ENCODE measurements at regions of chr12 and their contacts with region 1.

Region 1: GRCh38 chr12:43179486-43179885 is 372.5 kb downstream of the ADAMTS20 start:
- DNase-seq: no peak
- ATAC-seq: no peak
- H3K4me3 ChIP-seq: no peak overlapping the region
- H3K4me3 Mint-ChIP-seq: no peak overlapping the region
- H3K27ac ChIP-seq: no peak overlapping the region
- H3K27ac Mint-ChIP-seq: no peak overlapping the region
- H3K4me1 ChIP-seq: no peaks in the 10 kb centered on the region
- H3K4me1 Mint-ChIP-seq: no peaks in the 10 kb centered on the region
- H3K27me3 ChIP-seq: no peaks in the 10 kb centered on the region
- H3K27me3 Mint-ChIP-seq: no peaks in the 10 kb centered on the region

Region 2: GRCh38 chr12:43151441-43151981 is 28.0 kb before region 1 on chr12:
- CTCF ChIA-PET with region 1: no interaction called
- POLR2A ChIA-PET with region 1: interaction called in 1 of 2 experiments, 21 read pairs
- DNase-seq: no peak
- ATAC-seq: no peak
- H3K4me3 ChIP-seq: no peak overlapping the region
- H3K4me3 Mint-ChIP-seq: no peak overlapping the region
- H3K27ac ChIP-seq: no peak overlapping the region
- H3K27ac Mint-ChIP-seq: no peak overlapping the region
- H3K4me1 ChIP-seq: no peaks in the 10 kb centered on the region
- H3K4me1 Mint-ChIP-seq: no peaks in the 10 kb centered on the region
- H3K27me3 ChIP-seq: no peaks in the 10 kb centered on the region
- H3K27me3 Mint-ChIP-seq: no peaks in the 10 kb centered on the region

Region 3: DNA sequence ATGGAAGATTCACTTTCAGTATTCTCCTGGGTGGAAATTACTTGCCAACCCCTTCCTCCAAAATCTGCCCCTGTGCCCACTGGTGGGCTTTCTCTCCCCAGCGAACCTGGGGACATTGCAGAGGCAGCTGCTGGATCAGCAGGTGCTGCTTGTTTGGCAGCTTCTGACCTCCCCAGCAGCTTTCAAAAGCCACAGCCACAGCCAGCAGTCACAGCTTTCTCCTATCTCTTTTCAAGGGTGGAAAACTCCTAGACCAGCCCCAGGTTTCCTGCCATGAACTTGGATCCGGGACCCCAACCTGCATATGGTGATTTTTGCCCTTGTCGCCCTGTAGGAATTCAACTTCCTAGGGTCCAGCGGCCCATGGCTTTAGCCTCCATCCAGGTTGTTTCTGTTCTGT is 41.7 kb after region 1 on chr12:
- CTCF ChIA-PET with region 1: no interaction called
- POLR2A ChIA-PET with region 1: no interaction called
- DNase-seq: no peak
- ATAC-seq: no peak
- H3K4me3 ChIP-seq: no peak overlapping the region
- H3K4me3 Mint-ChIP-seq: no peak overlapping the region
- H3K27ac ChIP-seq: no peak overlapping the region
- H3K27ac Mint-ChIP-seq: no peak overlapping the region
- H3K4me1 ChIP-seq: no peaks in the 10 kb centered on the region
- H3K4me1 Mint-ChIP-seq: no peaks in the 10 kb centered on the region
- H3K27me3 ChIP-seq: no peaks in the 10 kb centered on the region
- H3K27me3 Mint-ChIP-seq: no peaks in the 10 kb centered on the region

Measured in T-cell (primary cell).